ENCODE measurements at regions of chr3 and their contacts with region 1.

Region 1: DNA sequence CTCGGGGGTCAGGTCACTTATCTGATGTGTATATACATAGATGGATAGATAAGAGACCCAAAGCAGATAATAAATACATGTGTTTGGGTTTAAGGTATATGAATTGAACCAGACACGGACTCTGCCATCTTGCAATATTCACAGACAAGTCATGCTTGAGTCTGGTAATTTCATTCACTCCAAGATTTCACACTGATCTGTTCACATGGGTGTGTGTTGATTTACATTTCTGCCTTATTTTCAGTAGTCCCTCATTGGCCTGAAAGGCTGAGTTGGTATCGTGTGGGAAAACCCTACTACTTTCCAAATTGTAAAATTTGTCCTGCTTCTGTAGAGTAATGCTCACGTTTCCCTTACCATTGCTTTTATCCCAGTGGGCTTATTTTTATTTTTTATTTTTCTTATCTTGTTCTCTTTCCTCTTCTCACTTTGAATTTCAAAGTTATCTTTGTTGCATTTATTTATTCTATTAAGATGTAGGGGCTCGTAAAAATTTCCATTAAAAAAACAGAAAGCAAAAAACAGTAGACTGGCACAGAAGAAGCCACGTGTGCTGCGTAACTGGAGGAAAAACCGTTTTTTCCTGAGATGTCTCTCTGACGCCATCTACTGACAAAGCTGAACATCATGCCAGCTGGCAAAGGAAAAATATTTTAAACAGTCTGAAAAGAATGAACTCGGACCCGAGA is 10.8 kb upstream of the MFSD1 start:
- DNase-seq: peak; percentile 48
- ATAC-seq: peak; percentile 73
- H3K4me3 ChIP-seq: no peak overlapping the region
- H3K27ac ChIP-seq: no peak overlapping the region
- H3K4me1 ChIP-seq: peaks cover 2 to 4% of the 10 kb centered on the region in 2 experiments; a peak in 3 of 4 replicates
- H3K27me3 ChIP-seq: no peaks in the 10 kb centered on the region
- CTCF ChIP-seq: peak; percentile 79 to 81 (median 80)
- POLR2A ChIP-seq: no peak
- RAD21 ChIP-seq: peak; percentile 81

Region 2: DNA sequence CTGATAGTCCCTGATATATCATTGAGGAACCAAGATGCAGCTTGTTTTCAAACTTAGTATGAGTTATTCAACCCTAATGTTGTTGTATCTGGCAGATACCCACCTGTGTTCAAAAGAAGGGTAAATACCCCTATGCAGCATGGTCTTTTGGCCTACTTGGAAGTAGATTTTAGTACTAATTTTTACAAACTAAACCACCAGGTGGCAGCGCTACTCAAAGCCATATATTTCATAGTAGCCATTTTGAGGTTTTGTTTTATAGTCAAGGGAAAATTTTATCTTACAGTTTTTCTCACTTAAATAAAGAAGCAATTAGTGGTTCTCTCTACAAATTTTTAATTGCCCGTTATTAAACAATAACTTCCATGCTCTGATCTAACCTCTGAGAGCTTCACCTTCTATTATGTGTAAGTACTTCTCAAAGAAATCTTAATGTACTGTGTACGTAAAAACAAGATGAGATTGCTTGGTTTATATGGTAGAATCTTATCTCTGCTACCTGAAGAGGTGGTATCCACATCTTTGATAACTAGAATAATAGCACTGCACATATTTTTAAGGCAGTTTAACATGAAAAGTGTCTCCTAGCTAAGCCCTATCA is 251.5 kb before region 1 on chr3:
- CTCF ChIA-PET with region 1: interaction called, 10 read pairs
- POLR2A ChIA-PET with region 1: no interaction called
- RAD21 ChIA-PET with region 1: no interaction called
- intact Hi-C with region 1: loop called (anchors 1 kb)
- DNase-seq: peak; percentile 42
- ATAC-seq: peak; percentile 70
- H3K4me3 ChIP-seq: no peak overlapping the region
- H3K27ac ChIP-seq: no peak overlapping the region
- H3K4me1 ChIP-seq: no peaks in the 10 kb centered on the region
- H3K27me3 ChIP-seq: no peaks in the 10 kb centered on the region
- CTCF ChIP-seq: peak; percentile 49 to 75 (median 49); a peak in 5 of 6 replicates
- POLR2A ChIP-seq: no peak
- RAD21 ChIP-seq: peak; percentile 56

Region 3: GRCh38 chr3:158659454-158660237 is 131.4 kb before region 1 on chr3:
- CTCF ChIA-PET with region 1: interaction called, 38 read pairs
- POLR2A ChIA-PET with region 1: no interaction called
- RAD21 ChIA-PET with region 1: interaction called, 5 to 6 read pairs
- intact Hi-C with region 1: loop called (anchors 1 kb)
- DNase-seq: peak; percentile 33
- ATAC-seq: peak; percentile 83
- H3K4me3 ChIP-seq: no peak overlapping the region
- H3K27ac ChIP-seq: no peak overlapping the region
- H3K4me1 ChIP-seq: no peaks in the 10 kb centered on the region
- H3K27me3 ChIP-seq: no peaks in the 10 kb centered on the region
- CTCF ChIP-seq: peak; percentile 46 to 73 (median 71); a peak in 5 of 6 replicates
- POLR2A ChIP-seq: no peak
- RAD21 ChIP-seq: peak; percentile 48

Region 4: DNA sequence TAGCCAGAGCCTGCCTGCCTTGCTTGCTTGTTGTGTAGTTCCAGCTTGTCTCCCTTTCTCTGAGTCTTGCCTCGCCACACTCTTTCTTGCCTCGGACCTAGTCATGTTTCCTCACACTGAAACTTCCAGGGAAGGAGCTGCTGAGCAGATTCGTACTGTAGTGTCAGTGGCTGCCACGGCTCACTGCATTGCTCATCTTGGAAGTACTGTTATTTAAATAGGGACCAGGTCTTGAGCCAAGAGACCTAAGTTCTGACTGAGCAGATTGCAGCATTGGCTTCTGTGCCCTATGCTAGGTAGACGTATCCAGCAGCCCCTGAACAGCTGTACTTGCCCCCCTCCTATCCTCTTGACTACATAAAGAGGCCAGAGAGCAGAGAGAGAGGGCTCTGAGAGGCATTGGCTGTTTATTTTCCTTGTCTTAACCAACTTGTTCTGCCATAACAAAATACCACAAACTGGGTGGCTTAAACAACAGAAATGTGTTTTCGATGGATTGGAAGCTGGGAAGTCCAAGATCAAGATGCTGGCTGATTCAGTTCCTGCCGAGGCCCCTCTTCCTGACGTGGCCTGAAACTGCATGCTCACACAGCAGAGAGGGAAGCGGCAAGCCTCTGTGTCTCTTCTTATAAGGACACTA is 52.9 kb before region 1 on chr3:
- CTCF ChIA-PET with region 1: no interaction called
- POLR2A ChIA-PET with region 1: no interaction called
- RAD21 ChIA-PET with region 1: no interaction called
- intact Hi-C with region 1: no loop called
- DNase-seq: no peak
- ATAC-seq: no peak
- H3K4me3 ChIP-seq: no peak overlapping the region
- H3K27ac ChIP-seq: no peak overlapping the region
- H3K4me1 ChIP-seq: no peaks in the 10 kb centered on the region
- H3K27me3 ChIP-seq: no peaks in the 10 kb centered on the region
- CTCF ChIP-seq: no peak
- POLR2A ChIP-seq: no peak
- RAD21 ChIP-seq: no peak

Region 5: GRCh38 chr3:159252772-159253384 is 461.8 kb after region 1 on chr3:
- CTCF ChIA-PET with region 1: interaction called, 14 read pairs
- POLR2A ChIA-PET with region 1: no interaction called
- RAD21 ChIA-PET with region 1: no interaction called
- intact Hi-C with region 1: loop called (anchors 2 kb)
- DNase-seq: peak; percentile 70
- ATAC-seq: peak; percentile 55; the same call in 1 of the 2 replicates
- H3K4me3 ChIP-seq: no peak overlapping the region
- H3K27ac ChIP-seq: no peak overlapping the region
- H3K4me1 ChIP-seq: no peaks in the 10 kb centered on the region
- H3K27me3 ChIP-seq: no peaks in the 10 kb centered on the region
- CTCF ChIP-seq: peak; percentile 66 to 90 (median 88)
- POLR2A ChIP-seq: no peak
- RAD21 ChIP-seq: peak; percentile 94

Measured in HCT116 (cell line).